ENCODE measurements at regions of chr7 and their contacts with region 1.

Region 1: DNA sequence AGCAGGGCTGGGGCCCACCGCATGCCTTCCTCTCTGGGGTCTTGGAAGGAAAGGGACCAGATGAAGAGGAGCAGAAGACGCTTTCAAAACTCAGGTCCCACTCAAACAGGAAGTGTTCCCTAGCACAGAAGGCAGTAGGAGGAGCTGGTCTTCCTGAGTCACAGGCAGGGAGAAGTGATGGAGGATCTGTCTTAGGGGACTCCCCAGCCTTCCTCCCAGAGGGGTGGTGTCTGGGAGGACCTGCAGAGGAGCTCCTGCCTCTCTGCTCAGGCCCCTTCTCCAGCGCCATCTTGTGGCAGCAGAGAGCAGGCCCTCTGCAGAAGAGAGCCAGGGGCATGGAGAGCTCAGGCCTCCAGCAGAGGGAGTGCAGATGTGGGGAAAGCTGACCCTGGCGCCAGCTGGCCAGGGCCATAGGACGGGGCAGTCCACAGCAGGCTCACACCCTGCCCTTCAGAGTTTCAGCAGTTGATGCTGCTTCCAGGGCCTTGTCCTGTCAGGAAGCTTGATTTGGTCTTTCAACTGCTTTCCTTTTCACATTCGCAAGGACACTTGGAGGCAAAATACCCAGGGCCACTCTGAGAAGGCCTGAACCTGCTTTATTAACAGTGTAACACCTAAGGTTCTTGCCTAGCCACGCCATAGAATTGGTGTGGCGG is 62.2 kb upstream of the TARP start:
- DNase-seq: peak; percentile 71
- H3K4me3 Mint-ChIP-seq: peak overlapping the region; percentile 72
- H3K27ac Mint-ChIP-seq: peak overlapping the region; percentile 65
- H3K4me1 Mint-ChIP-seq: peaks cover 42% of the 10 kb centered on the region
- H3K27me3 Mint-ChIP-seq: no peaks in the 10 kb centered on the region

Region 2: GRCh38 chr7:38215735-38216670 is 119.6 kb before region 1 on chr7:
- intact Hi-C with region 1: loop called (anchors 1 kb)
- DNase-seq: peak; percentile 70
- H3K4me3 Mint-ChIP-seq: no peak overlapping the region
- H3K27ac Mint-ChIP-seq: no peak overlapping the region
- H3K4me1 Mint-ChIP-seq: peaks cover 36% of the 10 kb centered on the region
- H3K27me3 Mint-ChIP-seq: no peaks in the 10 kb centered on the region

Region 3: GRCh38 chr7:38748056-38748611 is 412.5 kb after region 1 on chr7:
- intact Hi-C with region 1: no loop called
- DNase-seq: no peak
- H3K4me3 Mint-ChIP-seq: no peak overlapping the region
- H3K27ac Mint-ChIP-seq: no peak overlapping the region
- H3K4me1 Mint-ChIP-seq: peaks cover 2% of the 10 kb centered on the region
- H3K27me3 Mint-ChIP-seq: no peaks in the 10 kb centered on the region